Panc1 (cell line): ENCODE measurements at regions of chr2 and their contacts with region 1.

Region 1: GRCh38 chr2:182763311-182763912 is 47.4 kb downstream of the DNAJC10 start:
- DNase-seq: no peak
- ATAC-seq: peak; percentile 76; the same call in 1 of the 2 replicates
- H3K4me3 ChIP-seq: no peak overlapping the region
- H3K27ac ChIP-seq: no peak overlapping the region
- H3K4me1 ChIP-seq: no peaks in the 10 kb centered on the region
- H3K27me3 ChIP-seq: no peaks in the 10 kb centered on the region
- CTCF ChIP-seq: peak; percentile 82

Region 2: DNA sequence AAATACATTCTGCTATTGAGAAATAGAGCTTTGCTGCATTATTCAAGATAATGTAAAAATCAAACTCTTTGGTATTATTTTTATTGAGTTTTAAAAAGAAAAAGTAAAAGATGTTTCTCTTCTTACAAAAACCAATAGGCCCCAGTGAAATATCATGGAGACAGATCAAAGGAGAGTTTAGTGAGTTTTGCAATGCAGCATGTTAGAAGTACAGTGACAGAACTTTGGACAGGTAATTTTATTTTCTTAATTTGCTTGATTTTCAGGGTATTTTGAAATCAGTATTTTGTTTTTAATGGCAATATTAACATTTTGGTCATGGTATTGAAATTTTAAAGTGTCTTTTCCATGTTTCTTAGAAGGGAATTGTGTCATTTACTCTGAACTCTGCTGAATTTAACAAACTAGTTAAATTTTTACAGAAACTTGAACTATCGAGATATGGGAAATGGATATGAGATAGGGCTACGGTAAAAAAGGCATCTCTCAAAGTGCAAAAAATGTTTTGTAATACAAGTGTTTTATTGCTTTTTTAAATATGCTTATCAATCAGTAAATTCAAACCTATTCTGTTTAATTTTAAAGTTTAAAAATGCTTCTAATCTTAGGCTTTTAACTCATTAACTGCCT is 33.6 kb before region 1 on chr2:
- CTCF ChIA-PET with region 1: no interaction called
- POLR2A ChIA-PET with region 1: no interaction called
- in situ Hi-C with region 1: no loop called
- intact Hi-C with region 1: no loop called
- DNase-seq: no peak
- ATAC-seq: no peak
- H3K4me3 ChIP-seq: no peak overlapping the region
- H3K27ac ChIP-seq: no peak overlapping the region
- H3K4me1 ChIP-seq: no peaks in the 10 kb centered on the region
- H3K27me3 ChIP-seq: no peaks in the 10 kb centered on the region
- CTCF ChIP-seq: no peak

Region 3: GRCh38 chr2:182852084-182852483 is 88.7 kb after region 1 on chr2:
- CTCF ChIA-PET with region 1: no interaction called
- POLR2A ChIA-PET with region 1: interaction called, 10 read pairs
- in situ Hi-C with region 1: no loop called
- intact Hi-C with region 1: no loop called
- DNase-seq: no peak
- ATAC-seq: no peak
- H3K4me3 ChIP-seq: no peak overlapping the region
- H3K27ac ChIP-seq: no peak overlapping the region
- H3K4me1 ChIP-seq: no peaks in the 10 kb centered on the region
- H3K27me3 ChIP-seq: peaks cover 7% of the 10 kb centered on the region; the same call in 1 of the 2 replicates
- CTCF ChIP-seq: no peak

Region 4: GRCh38 chr2:182862091-182862490 is 98.7 kb after region 1 on chr2:
- CTCF ChIA-PET with region 1: no interaction called
- POLR2A ChIA-PET with region 1: no interaction called
- in situ Hi-C with region 1: no loop called
- intact Hi-C with region 1: no loop called
- DNase-seq: no peak
- ATAC-seq: no peak
- H3K4me3 ChIP-seq: no peak overlapping the region
- H3K27ac ChIP-seq: no peak overlapping the region
- H3K4me1 ChIP-seq: no peaks in the 10 kb centered on the region
- H3K27me3 ChIP-seq: peaks cover 3% of the 10 kb centered on the region; the same call in 1 of the 2 replicates
- CTCF ChIP-seq: no peak

Region 5: GRCh38 chr2:182980115-182980514 is 216.7 kb after region 1 on chr2:
- CTCF ChIA-PET with region 1: interaction called, 4 read pairs
- POLR2A ChIA-PET with region 1: no interaction called
- in situ Hi-C with region 1: no loop called
- intact Hi-C with region 1: loop called (anchors 10 kb)
- DNase-seq: no peak
- ATAC-seq: peak; percentile 71
- H3K4me3 ChIP-seq: no peak overlapping the region
- H3K27ac ChIP-seq: no peak overlapping the region
- H3K4me1 ChIP-seq: no peaks in the 10 kb centered on the region
- H3K27me3 ChIP-seq: no peaks in the 10 kb centered on the region
- CTCF ChIP-seq: no peak; the same call in 1 of the 2 replicates